ENCODE measurements at regions of chr16 and their contacts with region 1.

Region 1: DNA sequence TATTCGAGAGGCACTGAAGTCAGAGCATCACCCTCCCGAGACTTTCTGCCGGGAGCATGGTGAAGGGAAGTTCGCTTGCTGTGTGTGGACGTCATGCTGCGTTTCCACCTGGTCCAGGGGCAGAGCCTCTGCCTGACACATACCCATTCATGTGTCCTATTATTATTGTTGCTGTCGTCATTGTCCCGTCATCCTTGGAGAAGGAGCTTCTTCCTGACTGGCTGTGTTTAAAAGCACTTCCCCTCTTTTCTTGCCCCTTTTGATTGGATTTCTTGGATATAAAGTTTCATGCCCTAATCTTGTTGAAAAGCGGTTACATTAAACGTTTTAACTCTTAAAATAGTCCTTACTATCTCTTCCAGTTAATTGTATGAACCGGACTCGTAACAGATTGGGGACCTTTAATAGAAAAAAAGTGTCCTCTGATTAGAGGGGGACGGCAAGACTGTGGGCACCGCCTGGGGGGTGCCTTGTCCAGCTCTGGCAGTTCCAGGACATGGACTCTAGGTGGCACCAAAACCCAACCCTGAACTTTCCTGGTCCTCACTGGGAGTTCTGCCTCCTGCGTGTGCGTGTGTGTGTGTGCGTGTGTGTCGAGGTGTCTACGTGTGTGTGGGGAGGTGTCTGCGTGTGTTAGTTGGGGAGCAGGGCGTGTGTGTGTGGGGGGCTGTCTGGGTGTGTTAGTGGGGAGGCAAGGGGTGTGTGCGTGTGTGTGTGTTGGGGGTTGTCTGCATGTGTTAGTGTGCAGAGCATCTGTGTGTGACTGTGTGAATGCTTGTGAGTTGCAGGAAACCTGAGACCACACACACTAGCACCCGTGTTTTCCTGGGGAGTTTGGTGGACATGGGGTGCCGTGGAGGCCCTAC is 133.3 kb upstream of the CIBAR2 start:
- DNase-seq: peak; percentile 82
- H3K4me3 ChIP-seq: no peak overlapping the region; a peak in 1 of 4 replicates
- H3K27ac ChIP-seq: peak overlapping the region in 1 of 2 experiments; percentile 59; a peak in 2 of 4 replicates
- H3K4me1 ChIP-seq: peaks cover 0 to 56% of the 10 kb centered on the region in 2 experiments; a peak in 1 of 4 replicates
- H3K27me3 ChIP-seq: no peaks in the 10 kb centered on the region
- CTCF ChIP-seq: peak; percentile 88
- EP300 ChIP-seq: no peak
- RAD21 ChIP-seq: peak; percentile 89

Region 2: GRCh38 chr16:85234310-85235204 is 11.0 kb before region 1 on chr16:
- CTCF ChIA-PET with region 1: interaction called, 29 read pairs
- POLR2A ChIA-PET with region 1: interaction called, 6 read pairs
- DNase-seq: peak; percentile 96
- H3K4me3 ChIP-seq: peak overlapping the region; percentile 44 to 61
- H3K27ac ChIP-seq: peak overlapping the region; percentile 60 to 90; a peak in 3 of 4 replicates
- H3K4me1 ChIP-seq: peaks cover 21 to 45% of the 10 kb centered on the region in 2 experiments; a peak in 3 of 4 replicates
- H3K27me3 ChIP-seq: no peaks in the 10 kb centered on the region
- CTCF ChIP-seq: no peak
- EP300 ChIP-seq: peak in 1 of 2 experiments; percentile 9; a peak in 1 of 4 replicates
- RAD21 ChIP-seq: no peak; the same call in 1 of the 2 replicates

Region 3: DNA sequence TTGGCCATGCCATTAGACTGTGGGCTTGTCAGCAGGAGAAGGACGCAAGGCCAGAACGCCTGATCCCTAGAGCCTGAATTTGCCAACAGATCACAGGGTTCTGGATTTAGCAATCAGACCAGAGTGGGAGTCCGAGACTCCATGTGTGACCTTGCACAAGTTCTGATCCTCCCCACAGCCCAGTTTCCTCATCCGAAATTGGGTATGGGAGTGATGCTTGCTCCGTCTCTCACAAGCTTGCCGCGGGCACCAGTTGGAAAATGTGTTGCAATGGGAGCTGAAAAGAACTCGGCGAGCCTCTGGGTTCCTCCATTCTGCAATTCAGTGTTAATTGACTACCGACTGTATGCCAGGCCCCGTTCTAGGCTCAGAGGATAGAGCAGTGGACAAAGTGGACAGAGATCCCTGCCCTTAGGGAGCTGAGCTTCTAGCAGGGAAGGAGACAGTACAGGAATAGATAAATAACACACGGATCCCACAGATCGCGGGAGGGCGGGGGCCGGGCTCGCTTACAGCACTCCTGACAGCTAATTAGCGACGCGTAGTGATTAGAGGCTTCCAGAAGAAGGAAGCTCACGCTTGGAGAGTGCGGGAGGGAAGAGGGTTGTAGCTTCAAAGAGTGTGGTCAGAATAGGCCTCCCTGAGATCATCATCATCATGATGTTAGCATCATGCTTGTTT is 17.2 kb after region 1 on chr16:
- CTCF ChIA-PET with region 1: interaction called, 180 read pairs
- POLR2A ChIA-PET with region 1: no interaction called
- DNase-seq: no peak
- H3K4me3 ChIP-seq: no peak overlapping the region
- H3K27ac ChIP-seq: no peak overlapping the region
- H3K4me1 ChIP-seq: peaks cover 0 to 57% of the 10 kb centered on the region in 2 experiments; a peak in 1 of 4 replicates
- H3K27me3 ChIP-seq: no peaks in the 10 kb centered on the region
- CTCF ChIP-seq: no peak
- EP300 ChIP-seq: no peak
- RAD21 ChIP-seq: no peak